MCF 10A (cell line): ENCODE measurements at regions of chr20 and their contacts with region 1.

Region 1: DNA sequence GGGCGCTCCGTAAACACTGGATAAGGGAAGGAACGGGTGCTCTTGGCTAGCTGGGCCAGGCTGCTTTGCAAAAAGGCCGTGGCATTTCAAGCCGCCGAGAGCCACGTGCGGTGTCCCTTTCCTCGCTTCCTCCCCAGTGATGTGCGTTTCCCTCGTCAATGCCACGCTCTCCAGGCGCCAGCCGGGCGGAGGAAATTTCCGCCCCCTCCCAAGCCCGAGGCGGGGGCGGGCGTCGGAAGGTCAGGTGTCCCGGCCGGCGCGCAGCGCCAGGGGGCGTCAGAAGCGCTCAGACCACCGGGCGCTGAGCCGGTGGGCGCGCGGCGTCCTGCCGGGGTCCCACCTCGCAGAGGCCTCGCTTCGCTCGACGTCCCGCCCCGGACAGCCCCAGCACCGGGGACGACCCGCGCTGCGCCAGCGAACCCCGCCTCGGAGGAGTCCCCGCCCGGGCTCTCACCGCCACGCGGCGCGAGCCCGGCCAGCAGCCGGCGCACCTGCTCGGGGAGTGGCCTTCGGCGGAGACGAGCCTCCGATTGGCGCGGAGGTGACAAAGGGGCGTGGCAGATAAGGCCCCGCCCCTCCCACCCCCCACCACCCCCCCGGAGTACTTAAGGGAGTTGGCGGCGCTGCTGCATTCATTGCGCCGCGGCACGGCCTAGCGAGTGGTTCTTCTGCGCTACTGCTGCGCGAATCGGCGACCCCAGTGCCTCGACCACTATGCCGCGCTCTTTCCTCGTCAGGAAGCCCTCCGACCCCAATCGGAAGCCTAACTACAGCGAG is at the start of gene SNAI1:
- DNase-seq: peak; percentile 86
- H3K4me3 Mint-ChIP-seq: peak within 1 kb of the TSS; percentile 55
- H3K27ac Mint-ChIP-seq: peak within 1 kb of the TSS; percentile 75
- H3K4me1 Mint-ChIP-seq: peaks cover 6% of the 10 kb centered on the region
- H3K27me3 Mint-ChIP-seq: peaks cover 19% of the 10 kb centered on the region
- CTCF ChIP-seq: peak; percentile 65
- total RNA-seq, gene SNAI1: 0.17 and 0.23 TPM in 2 replicates

Region 2: DNA sequence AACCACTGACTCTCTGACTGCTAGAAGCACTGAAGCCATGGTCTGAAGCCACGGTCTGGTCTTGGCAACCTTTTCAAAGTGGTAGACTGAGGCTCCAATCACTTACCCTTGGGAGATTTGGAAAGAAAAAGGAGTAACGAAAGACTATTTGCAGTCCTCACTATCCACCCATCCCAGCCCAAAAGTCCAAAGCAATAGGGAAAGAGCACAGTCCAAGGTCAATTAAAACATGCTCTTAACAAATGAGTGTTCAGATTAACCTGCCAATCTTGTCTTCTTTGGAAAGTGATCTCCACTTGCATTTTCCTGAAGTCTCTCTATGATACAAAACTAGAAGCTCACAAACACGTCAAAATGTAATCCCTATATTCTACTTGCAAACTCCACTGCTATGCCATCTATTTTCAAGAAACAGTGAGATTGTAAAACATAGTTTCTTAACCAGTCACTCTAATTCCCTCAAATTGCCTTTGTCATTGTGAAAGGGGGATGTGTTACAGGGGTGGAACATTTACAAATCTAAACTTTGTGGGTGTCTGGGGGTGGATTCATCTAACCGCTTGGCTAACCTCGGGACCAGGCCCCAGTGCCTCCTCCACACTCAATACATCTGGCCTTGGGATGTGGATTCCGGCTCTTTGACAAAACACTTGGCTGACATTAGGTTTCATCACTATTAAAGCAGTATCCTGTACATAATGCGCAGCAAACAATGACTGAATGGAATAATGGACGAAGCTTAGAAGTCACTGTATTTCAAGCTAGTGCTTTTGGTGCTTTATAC is 325.2 kb before region 1 on chr20:
- CTCF ChIA-PET with region 1: no interaction called
- POLR2A ChIA-PET with region 1: no interaction called
- intact Hi-C with region 1: no loop called
- DNase-seq: no peak
- H3K4me3 Mint-ChIP-seq: no peak overlapping the region
- H3K27ac Mint-ChIP-seq: no peak overlapping the region
- H3K4me1 Mint-ChIP-seq: peaks cover 11% of the 10 kb centered on the region
- H3K27me3 Mint-ChIP-seq: no peaks in the 10 kb centered on the region
- CTCF ChIP-seq: no peak

Region 3: DNA sequence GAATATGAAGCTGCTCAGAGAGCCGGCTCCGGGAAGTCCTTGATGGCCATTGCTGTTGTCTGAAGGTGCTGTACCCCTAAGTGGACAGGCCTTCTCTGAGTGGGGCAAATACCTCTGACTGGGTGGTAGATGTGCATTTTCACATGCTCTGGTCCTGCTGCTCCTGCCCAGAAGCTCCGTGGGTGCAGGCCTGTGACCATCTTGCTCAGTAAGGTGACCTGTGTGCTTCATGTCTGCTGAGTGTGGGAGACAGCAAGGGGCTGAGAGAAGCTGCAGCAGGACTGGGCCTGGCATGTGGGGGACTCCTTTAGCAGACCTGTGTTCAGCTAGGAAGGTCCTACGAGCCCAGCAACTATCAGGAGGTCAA is 72.2 kb before region 1 on chr20:
- CTCF ChIA-PET with region 1: no interaction called
- POLR2A ChIA-PET with region 1: no interaction called
- intact Hi-C with region 1: no loop called
- DNase-seq: no peak
- H3K4me3 Mint-ChIP-seq: no peak overlapping the region
- H3K27ac Mint-ChIP-seq: no peak overlapping the region
- H3K4me1 Mint-ChIP-seq: peaks cover 11% of the 10 kb centered on the region
- H3K27me3 Mint-ChIP-seq: no peaks in the 10 kb centered on the region
- CTCF ChIP-seq: no peak

Region 4: GRCh38 chr20:49948809-49949548 is 33.6 kb before region 1 on chr20:
- CTCF ChIA-PET with region 1: interaction called, 12 read pairs
- POLR2A ChIA-PET with region 1: no interaction called
- intact Hi-C with region 1: no loop called
- DNase-seq: no peak
- H3K4me3 Mint-ChIP-seq: no peak overlapping the region
- H3K27ac Mint-ChIP-seq: no peak overlapping the region
- H3K4me1 Mint-ChIP-seq: peaks cover 11% of the 10 kb centered on the region
- H3K27me3 Mint-ChIP-seq: no peaks in the 10 kb centered on the region
- CTCF ChIP-seq: no peak

Region 5: DNA sequence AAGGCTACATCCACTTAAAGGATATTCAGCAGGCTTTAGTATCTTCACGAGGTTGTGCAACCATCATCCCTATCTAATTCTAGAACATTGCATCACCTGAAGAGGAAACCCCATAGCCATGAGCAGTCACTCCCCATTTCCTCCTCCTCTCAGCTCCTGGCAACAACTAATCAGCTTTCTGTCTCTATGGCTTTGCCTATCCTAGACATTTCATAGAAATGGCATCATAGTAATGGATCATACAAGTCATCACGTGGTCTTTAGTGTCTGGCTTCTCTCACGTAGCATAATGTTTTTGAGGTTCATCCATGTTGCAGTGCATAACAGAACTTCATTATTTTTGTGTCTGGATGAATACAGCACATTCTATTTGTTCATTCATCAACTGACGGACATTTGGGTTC is 20.7 kb after region 1 on chr20:
- CTCF ChIA-PET with region 1: interaction called, 16 read pairs
- POLR2A ChIA-PET with region 1: no interaction called
- intact Hi-C with region 1: no loop called
- DNase-seq: peak; percentile 87
- H3K4me3 Mint-ChIP-seq: no peak overlapping the region
- H3K27ac Mint-ChIP-seq: no peak overlapping the region
- H3K4me1 Mint-ChIP-seq: peaks cover 6% of the 10 kb centered on the region
- H3K27me3 Mint-ChIP-seq: no peaks in the 10 kb centered on the region
- CTCF ChIP-seq: no peak

Region 6: GRCh38 chr20:50027611-50028105 is 45.1 kb after region 1 on chr20:
- CTCF ChIA-PET with region 1: interaction called, 12 read pairs
- POLR2A ChIA-PET with region 1: no interaction called
- intact Hi-C with region 1: no loop called
- DNase-seq: peak; percentile 97
- H3K4me3 Mint-ChIP-seq: no peak overlapping the region
- H3K27ac Mint-ChIP-seq: peak overlapping the region; percentile 54
- H3K4me1 Mint-ChIP-seq: peaks cover 48% of the 10 kb centered on the region
- H3K27me3 Mint-ChIP-seq: no peaks in the 10 kb centered on the region
- CTCF ChIP-seq: no peak

Region 7: DNA sequence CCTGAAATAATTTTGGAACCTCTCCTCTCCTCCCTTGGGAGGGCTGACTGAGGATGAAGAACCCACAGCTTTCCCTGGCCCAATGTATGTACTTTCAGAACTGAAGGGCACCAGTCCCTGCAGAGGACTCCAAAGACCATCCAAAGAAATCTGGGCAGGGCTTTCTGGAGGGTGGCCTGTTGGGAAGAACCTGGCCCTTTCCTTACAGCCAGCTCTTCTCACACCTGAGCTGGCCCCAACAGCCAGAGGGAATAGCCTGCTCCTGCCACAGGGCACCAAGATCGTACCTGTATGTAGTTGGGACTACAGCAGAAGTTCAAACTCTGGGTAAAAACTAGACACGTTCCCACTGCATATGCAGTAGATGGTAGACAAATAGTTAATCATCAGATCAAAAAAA is 97.3 kb after region 1 on chr20:
- CTCF ChIA-PET with region 1: interaction called, 582 read pairs
- POLR2A ChIA-PET with region 1: interaction called, 4 read pairs
- intact Hi-C with region 1: no loop called
- DNase-seq: no peak
- H3K4me3 Mint-ChIP-seq: no peak overlapping the region
- H3K27ac Mint-ChIP-seq: no peak overlapping the region
- H3K4me1 Mint-ChIP-seq: no peaks in the 10 kb centered on the region
- H3K27me3 Mint-ChIP-seq: no peaks in the 10 kb centered on the region
- CTCF ChIP-seq: no peak

Region 8: DNA sequence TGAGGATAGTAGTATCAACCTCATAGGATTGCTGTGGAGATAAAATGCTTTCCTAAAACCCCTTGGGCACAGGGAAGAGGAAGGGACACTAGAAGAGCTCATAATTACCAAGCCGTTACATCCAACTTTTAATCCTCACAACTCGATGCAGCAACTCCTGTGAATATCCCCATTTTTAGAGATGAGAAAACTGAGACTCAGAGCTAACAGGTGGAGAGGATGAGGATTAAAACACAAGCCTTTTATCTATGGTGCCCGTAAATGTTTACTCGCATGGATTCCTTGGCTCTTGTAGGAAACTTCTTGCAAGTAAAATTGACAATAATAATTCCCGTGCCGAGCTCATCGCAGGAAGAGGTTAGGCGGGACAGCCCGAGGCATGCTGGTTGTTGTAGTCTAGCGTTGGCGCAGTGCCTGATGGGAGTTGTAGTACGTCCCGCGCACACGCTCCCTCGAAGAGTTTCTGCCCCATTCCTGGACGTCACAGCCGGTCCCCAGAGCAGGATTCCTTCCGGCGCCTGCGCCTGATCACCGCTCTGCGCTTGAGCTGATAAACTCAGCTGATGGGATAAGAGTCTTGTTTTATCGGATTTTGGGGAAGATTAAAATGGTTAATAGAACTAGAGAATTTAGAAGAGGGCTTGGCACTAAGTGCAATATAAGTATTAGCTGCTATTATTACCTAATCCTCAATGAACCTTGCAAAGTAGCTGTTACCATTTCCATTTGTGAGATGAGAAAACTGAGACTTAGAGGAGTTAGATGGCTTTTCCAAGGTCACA is 133.2 kb after region 1 on chr20:
- CTCF ChIA-PET with region 1: interaction called, 10 read pairs
- POLR2A ChIA-PET with region 1: interaction called, 4 read pairs
- intact Hi-C with region 1: no loop called
- DNase-seq: peak; percentile 97
- H3K4me3 Mint-ChIP-seq: peak overlapping the region; percentile 74
- H3K27ac Mint-ChIP-seq: peak overlapping the region; percentile 89
- H3K4me1 Mint-ChIP-seq: peaks cover 39% of the 10 kb centered on the region
- H3K27me3 Mint-ChIP-seq: no peaks in the 10 kb centered on the region
- CTCF ChIP-seq: no peak